IMR-90 (cell line): ENCODE measurements at regions of chr1 and their contacts with region 1.

Region 1: DNA sequence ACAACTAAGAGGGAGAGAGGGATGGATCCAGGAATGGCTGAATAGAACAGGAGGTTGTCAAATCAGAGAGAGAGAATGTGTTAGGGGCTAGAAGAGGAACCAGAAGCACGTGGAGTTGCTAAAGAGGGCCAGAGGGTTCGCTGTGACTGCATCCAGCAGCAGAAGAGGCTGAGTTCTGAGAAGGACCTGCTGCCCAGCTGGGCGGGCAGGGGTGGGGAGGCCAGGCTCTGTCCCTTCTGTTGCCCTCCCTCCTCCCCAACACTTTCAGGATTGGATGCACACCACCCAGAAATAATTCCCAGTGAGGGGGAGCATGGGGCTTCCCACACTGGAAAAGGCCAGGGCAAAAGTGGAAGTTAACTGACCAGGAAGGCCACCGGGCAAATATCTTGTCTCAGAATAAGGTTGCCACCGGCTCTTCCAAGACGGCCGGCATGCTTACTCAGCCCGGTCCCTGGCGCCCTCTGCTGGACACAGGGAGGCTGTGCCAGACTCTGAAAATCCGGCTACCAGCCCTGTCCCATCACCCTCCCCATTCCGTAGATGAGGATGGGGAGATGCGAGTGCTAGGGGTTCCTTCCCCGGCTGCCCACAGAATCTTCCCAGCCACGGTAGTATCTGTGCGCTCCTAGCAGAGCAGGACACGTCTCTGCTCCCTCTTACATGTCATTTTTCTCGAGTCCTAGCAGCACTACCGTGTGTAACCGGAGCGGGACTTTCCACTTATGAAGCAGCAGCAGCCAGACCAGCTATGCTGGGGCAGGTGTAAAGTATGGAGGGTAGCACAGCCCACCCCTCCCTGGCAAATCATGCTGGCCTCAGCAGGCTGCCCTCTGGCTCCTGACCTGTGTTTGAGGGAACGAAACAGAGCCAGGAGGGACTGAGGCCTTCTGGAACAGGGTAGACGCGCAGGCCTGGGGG is 46.8 kb upstream of the A3GALT2 start:
- DNase-seq: peak; percentile 75
- ATAC-seq: peak; percentile 73
- H3K4me3 ChIP-seq: no peak overlapping the region
- H3K27ac ChIP-seq: no peak overlapping the region
- H3K4me1 ChIP-seq: peaks cover 32% of the 10 kb centered on the region
- H3K27me3 ChIP-seq: no peaks in the 10 kb centered on the region
- CTCF ChIP-seq: peak; percentile 97
- POLR2A ChIP-seq: no peak
- RAD21 ChIP-seq: peak; percentile 99

Region 2: DNA sequence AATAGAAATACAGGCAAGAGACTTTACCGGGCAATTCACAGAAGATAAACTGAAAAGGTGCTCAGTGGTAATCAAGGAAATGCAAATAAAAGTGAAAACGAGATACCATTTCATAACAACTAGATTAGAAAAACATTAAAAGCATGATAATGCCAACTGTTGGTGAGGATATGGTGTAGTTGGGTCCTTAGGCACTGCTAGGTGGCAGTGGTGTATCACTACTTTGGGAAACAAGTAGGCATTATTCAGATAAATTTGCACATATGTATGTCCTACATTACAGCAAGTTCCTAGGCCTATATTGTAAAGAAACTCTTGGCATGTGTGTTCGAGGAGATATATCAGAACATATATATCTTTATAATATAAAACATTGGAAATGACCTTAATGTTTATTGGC is 255.8 kb before region 1 on chr1:
- CTCF ChIA-PET with region 1: no interaction called
- POLR2A ChIA-PET with region 1: no interaction called
- dilution Hi-C with region 1: no loop called
- in situ Hi-C with region 1: no loop called
- intact Hi-C with region 1: loop called (anchors 5 kb)
- DNase-seq: peak; percentile 44
- ATAC-seq: peak; percentile 72
- H3K4me3 ChIP-seq: no peak overlapping the region
- H3K27ac ChIP-seq: no peak overlapping the region
- H3K4me1 ChIP-seq: no peaks in the 10 kb centered on the region
- H3K27me3 ChIP-seq: no peaks in the 10 kb centered on the region
- CTCF ChIP-seq: peak; percentile 55
- POLR2A ChIP-seq: no peak
- RAD21 ChIP-seq: peak; percentile 63

Region 3: GRCh38 chr1:33295450-33296081 is 72.2 kb before region 1 on chr1:
- CTCF ChIA-PET with region 1: interaction called, 10 read pairs
- POLR2A ChIA-PET with region 1: no interaction called
- dilution Hi-C with region 1: no loop called
- in situ Hi-C with region 1: loop called (anchors 5 kb)
- intact Hi-C with region 1: loop called (anchors 1 kb)
- DNase-seq: peak; percentile 73
- ATAC-seq: peak; percentile 86
- H3K4me3 ChIP-seq: no peak overlapping the region
- H3K27ac ChIP-seq: no peak overlapping the region
- H3K4me1 ChIP-seq: peaks cover 1% of the 10 kb centered on the region; the same call in 1 of the 2 replicates
- H3K27me3 ChIP-seq: no peaks in the 10 kb centered on the region
- CTCF ChIP-seq: peak; percentile 94
- POLR2A ChIP-seq: 0 out of 2 replicates have a peak, but pooled peaks have one; percentile 32
- RAD21 ChIP-seq: peak; percentile 89

Region 4: DNA sequence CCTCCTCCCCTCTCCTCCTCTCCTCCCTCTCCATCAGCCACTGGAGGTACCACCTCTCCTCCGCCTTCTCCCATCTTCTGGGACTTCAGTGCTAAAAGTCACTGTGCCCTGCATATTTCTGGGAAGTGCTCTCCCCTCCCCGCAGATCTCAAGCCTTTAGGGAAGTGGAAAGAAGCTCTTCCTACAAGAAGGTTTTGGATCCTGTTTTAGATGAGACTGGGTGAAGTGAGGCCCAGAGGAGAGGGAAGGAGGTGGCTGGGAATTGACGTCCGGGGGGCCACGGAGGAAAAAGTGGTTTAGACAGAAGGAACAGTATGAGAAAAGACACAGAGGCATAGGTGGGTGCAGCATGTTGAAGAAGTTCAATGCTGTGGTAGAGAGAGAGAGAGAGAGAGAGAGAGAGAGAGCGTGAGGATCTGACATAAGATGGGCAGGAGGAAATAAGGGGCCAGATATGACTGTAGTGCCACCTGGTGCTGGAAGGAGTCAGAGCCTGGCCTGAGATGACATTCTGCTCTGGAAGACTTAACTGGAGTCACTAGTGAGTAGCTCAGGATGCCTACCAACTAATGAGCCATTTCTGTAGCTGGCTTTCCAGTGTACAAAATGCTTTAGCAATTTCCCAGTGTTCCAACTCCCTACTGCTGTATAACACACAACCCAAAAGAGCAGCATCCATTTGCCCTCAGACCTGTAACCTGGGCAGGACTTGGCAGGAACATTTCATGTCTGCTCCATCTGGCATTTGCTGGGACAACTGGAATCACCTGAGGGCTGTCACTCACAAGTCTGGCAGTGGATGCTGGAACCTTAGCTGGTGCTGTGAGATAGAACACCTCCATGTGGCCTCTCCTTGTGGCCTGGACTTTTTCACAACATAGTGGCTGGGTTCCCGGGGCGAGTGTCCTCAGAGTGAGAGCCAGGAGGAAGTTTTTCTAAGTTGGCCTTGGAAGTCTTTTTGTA is 88.1 kb after region 1 on chr1:
- CTCF ChIA-PET with region 1: interaction called, 12 read pairs
- POLR2A ChIA-PET with region 1: interaction called, 3 read pairs
- dilution Hi-C with region 1: no loop called
- in situ Hi-C with region 1: loop called (anchors 5 kb)
- intact Hi-C with region 1: loop called (anchors 1 kb)
- DNase-seq: peak; percentile 90
- ATAC-seq: peak; percentile 86
- H3K4me3 ChIP-seq: no peak overlapping the region
- H3K27ac ChIP-seq: no peak overlapping the region
- H3K4me1 ChIP-seq: peaks cover 16% of the 10 kb centered on the region
- H3K27me3 ChIP-seq: no peaks in the 10 kb centered on the region
- CTCF ChIP-seq: peak; percentile 93
- POLR2A ChIP-seq: 0 out of 2 replicates have a peak, but pooled peaks have one; percentile 24
- RAD21 ChIP-seq: peak; percentile 93